Sigmoid colon (tissue), 7 donors: ENCODE measurements at regions of chr17 and their contacts with region 1.

Region 1: GRCh38 chr17:21511363-21512198 is 135.4 kb downstream of the KCNJ12 start:
- DNase-seq: peak; percentile 91
- H3K4me3 ChIP-seq: peak overlapping the region; percentile 25 to 55 (median 54)
- H3K27ac ChIP-seq: peak overlapping the region in 3 of 4 donors; percentile 64 to 75 (median 72)
- H3K4me1 ChIP-seq: peaks cover 0 to 18% (median 16%) of the 10 kb centered on the region in 4 donors
- H3K27me3 ChIP-seq: no peaks in the 10 kb centered on the region
- CTCF ChIP-seq: peak; percentile 37 to 69 (median 62)
- EP300 ChIP-seq: no peak
- POLR2A ChIP-seq: no peak

Region 2: GRCh38 chr17:21318439-21318838 is 193.1 kb before region 1 on chr17:
- intact Hi-C with region 1: loop called (anchors 2 kb)
- DNase-seq: peak; percentile 65
- H3K4me3 ChIP-seq: no peak overlapping the region
- H3K27ac ChIP-seq: no peak overlapping the region
- H3K4me1 ChIP-seq: peaks cover 0 to 9% (median 8%) of the 10 kb centered on the region in 4 donors
- H3K27me3 ChIP-seq: no peaks in the 10 kb centered on the region
- CTCF ChIP-seq: no peak
- EP300 ChIP-seq: no peak
- POLR2A ChIP-seq: no peak

Region 3: GRCh38 chr17:21457051-21458026 is 54.2 kb before region 1 on chr17:
- intact Hi-C with region 1: loop called (anchors 1 kb)
- DNase-seq: peak; percentile 91
- H3K4me3 ChIP-seq: no peak overlapping the region
- H3K27ac ChIP-seq: peak overlapping the region in 1 of 4 donors; percentile 20
- H3K4me1 ChIP-seq: peaks cover 0 to 13% (median 10%) of the 10 kb centered on the region in 4 donors
- H3K27me3 ChIP-seq: peaks cover 0 to 5% (median 0%) of the 10 kb centered on the region in 3 donors
- CTCF ChIP-seq: peak; percentile 65 to 95 (median 72)
- EP300 ChIP-seq: no peak
- POLR2A ChIP-seq: no peak